PC-3 (cell line): ENCODE measurements at regions of chr18 and their contacts with region 1.

Region 1: GRCh38 chr18:32373995-32374394 is 96.7 kb downstream of the GAREM1 start:
- DNase-seq: peak; percentile 34
- ATAC-seq: no peak
- H3K4me3 ChIP-seq: no peak overlapping the region
- H3K27ac ChIP-seq: peak overlapping the region; percentile 87
- H3K4me1 ChIP-seq: peaks cover 31% of the 10 kb centered on the region
- H3K27me3 ChIP-seq: no peaks in the 10 kb centered on the region
- CTCF ChIP-seq: no peak

Region 2: DNA sequence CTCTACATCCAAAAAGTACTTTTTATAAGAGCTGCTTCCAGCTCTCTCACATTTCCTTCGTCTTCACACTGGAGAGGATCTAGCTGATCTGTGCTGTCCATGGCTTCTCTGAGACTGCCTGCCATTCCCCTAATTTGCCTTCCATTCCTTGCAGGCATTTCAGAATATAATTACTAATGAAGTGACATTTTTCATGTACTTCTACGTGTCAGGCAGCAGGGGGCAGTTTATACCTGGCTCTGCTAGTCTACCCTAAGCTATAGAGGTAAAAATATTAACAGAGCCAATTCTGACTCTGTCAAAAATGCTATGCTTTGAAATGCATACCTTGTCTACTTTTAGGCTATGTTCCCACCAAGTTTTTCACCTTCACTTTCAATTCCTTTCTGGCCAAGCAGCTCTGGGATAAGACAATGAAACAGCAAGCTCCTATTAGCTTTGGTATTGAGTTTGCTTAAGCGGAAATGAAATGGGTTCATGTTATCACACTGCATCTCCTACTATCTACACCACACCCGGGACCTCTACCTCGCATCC is 102.3 kb before region 1 on chr18:
- CTCF ChIA-PET with region 1: interaction called, 3 read pairs
- POLR2A ChIA-PET with region 1: no interaction called
- intact Hi-C with region 1: loop called (anchors 1 kb)
- DNase-seq: peak; percentile 30
- ATAC-seq: peak; percentile 68
- H3K4me3 ChIP-seq: no peak overlapping the region
- H3K27ac ChIP-seq: no peak overlapping the region
- H3K4me1 ChIP-seq: no peaks in the 10 kb centered on the region
- H3K27me3 ChIP-seq: no peaks in the 10 kb centered on the region
- CTCF ChIP-seq: peak; percentile 62

Region 3: DNA sequence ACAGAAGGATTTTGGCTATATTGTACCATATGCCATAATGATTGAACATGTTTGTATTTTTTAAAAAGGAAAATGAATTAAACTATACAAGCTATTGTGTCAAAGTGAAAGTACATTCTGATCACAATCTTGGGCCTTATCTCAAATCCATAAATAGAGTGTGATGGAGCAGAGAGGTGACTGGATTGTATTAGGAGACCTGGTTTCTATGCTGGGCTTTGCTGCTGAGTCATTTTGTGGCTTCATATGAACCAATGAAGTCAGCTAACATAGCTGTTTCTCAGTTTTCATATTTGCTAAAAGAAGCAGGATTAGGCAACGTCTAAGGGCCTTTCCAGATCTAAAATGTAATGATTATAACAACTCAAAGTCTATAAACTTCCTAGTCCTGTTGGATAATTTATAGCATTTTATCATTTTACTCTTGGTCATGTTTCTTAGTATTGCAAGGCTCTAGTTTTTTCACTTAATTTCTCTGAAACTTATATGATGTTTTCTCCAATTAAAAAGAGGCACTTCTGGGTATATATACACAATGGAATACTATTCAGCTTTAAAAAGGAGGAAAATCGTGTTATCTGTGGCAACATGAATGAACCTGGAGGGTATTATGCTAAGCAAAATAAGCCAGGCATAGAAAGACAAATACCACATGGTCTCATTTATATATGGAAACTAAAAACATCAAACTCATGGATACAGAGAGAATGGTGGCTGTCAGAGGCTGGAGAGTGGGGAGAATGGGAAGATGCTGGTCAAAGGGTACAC is 71.8 kb before region 1 on chr18:
- CTCF ChIA-PET with region 1: no interaction called
- POLR2A ChIA-PET with region 1: no interaction called
- intact Hi-C with region 1: loop called (anchors 5 kb)
- DNase-seq: peak; percentile 55
- ATAC-seq: peak; percentile 85
- H3K4me3 ChIP-seq: no peak overlapping the region
- H3K27ac ChIP-seq: peak overlapping the region; percentile 55
- H3K4me1 ChIP-seq: peaks cover 14% of the 10 kb centered on the region
- H3K27me3 ChIP-seq: no peaks in the 10 kb centered on the region
- CTCF ChIP-seq: no peak

Region 4: DNA sequence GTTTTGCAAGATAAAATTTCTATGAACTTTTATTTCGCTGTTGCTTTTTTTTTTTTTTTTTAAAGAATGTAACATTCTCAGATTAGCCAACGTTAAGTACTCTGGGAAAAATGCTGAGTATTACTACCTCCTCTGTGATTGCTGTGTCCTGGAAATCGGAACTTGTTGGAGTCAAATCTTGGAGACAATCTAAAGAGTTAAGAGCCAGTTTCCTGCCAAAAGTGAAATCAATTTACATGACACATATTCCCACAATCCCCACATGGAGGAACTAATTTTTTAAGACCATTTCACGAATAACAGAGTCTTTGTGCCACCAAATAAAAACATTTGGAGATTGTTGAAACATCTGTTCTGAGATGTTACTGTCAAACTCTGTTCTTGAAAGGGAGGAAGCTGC is 56.3 kb before region 1 on chr18:
- CTCF ChIA-PET with region 1: no interaction called
- POLR2A ChIA-PET with region 1: no interaction called
- intact Hi-C with region 1: loop called (anchors 5 kb)
- DNase-seq: no peak
- ATAC-seq: no peak
- H3K4me3 ChIP-seq: no peak overlapping the region
- H3K27ac ChIP-seq: no peak overlapping the region
- H3K4me1 ChIP-seq: peaks cover 4% of the 10 kb centered on the region; the same call in 1 of the 2 replicates
- H3K27me3 ChIP-seq: no peaks in the 10 kb centered on the region
- CTCF ChIP-seq: no peak

Region 5: DNA sequence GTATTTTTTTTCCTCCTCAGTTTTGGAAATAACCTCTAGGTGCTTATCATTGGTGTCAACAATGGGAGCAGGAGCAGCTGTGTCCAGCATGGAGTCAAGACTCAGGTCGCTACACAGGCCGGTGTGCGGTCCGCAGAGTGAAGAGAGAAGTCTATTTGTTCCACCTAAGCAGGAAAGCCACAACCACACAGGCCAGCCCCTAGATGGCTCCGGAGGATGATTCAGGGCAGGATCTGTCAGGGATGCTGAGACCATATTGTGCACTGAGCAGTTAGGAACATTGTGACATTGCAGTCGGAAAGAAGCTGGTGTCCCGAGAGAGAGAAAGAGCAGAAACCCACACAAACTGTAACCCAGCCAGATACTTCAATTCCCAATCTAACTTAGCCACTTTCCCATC is 40.2 kb before region 1 on chr18:
- CTCF ChIA-PET with region 1: no interaction called
- POLR2A ChIA-PET with region 1: no interaction called
- intact Hi-C with region 1: loop called (anchors 2 kb)
- DNase-seq: peak; percentile 19
- ATAC-seq: peak; percentile 80
- H3K4me3 ChIP-seq: no peak overlapping the region
- H3K27ac ChIP-seq: no peak overlapping the region
- H3K4me1 ChIP-seq: peaks cover 6% of the 10 kb centered on the region; the same call in 1 of the 2 replicates
- H3K27me3 ChIP-seq: no peaks in the 10 kb centered on the region
- CTCF ChIP-seq: peak; percentile 32; the same call in 1 of the 2 replicates

Region 6: DNA sequence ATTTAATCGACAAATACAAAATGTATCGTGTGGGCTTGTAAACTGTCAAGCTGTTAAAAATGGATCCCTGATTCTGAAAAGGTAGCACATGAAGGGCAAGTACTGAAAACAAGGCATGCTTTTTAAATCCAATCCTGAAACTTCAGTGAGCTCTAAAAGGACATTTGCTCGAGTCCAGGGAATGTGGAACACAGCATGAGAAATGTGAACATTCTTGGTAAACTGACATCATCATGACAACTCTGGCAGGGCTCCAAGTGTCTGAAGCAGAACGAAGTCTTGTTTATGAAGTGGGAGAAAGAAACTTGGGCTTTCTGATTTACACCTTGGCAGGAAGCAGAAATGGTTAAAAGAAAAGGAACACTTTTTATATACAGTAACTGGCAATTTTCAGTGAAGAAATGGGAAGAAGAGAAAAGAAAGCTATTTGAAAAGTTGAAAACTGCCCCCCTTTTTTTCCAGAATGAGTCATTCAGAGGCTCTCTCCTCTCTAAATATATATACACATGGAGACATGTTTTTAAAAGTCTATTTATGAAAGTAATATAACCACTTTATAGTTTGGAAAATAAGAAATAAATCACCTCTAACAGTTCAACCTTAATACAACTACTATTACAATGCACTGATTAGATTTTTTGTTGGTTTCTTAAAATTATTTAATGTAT is 24.1 kb before region 1 on chr18:
- CTCF ChIA-PET with region 1: no interaction called
- POLR2A ChIA-PET with region 1: no interaction called
- intact Hi-C with region 1: no loop called
- DNase-seq: peak; percentile 73
- ATAC-seq: no peak
- H3K4me3 ChIP-seq: peak overlapping the region; percentile 27; the same call in 1 of the 2 replicates
- H3K27ac ChIP-seq: peak overlapping the region; percentile 36
- H3K4me1 ChIP-seq: peaks cover 9% of the 10 kb centered on the region
- H3K27me3 ChIP-seq: no peaks in the 10 kb centered on the region
- CTCF ChIP-seq: no peak

Region 7: DNA sequence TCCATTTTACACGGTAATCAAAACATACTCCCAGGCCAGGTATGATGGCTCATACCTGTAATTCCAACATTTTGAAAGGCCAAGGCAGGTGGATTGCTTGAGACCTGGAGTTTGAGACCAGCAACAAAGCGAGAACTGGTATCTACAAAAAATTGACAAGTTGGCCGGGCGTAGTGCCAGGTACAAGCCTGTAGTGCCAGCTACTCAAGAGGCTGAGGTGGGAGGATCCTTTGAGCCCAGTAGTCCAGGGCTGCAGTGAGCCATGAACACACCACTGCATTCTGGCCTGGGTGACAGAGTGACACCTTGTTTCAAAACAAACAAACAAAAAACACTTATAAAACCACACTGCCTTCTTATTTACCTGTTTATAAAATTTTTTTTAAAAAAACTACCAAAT is 15.9 kb after region 1 on chr18:
- CTCF ChIA-PET with region 1: no interaction called
- POLR2A ChIA-PET with region 1: no interaction called
- intact Hi-C with region 1: no loop called
- DNase-seq: no peak
- ATAC-seq: no peak
- H3K4me3 ChIP-seq: no peak overlapping the region
- H3K27ac ChIP-seq: no peak overlapping the region
- H3K4me1 ChIP-seq: peaks cover 5% of the 10 kb centered on the region; the same call in 1 of the 2 replicates
- H3K27me3 ChIP-seq: no peaks in the 10 kb centered on the region
- CTCF ChIP-seq: no peak

Region 8: DNA sequence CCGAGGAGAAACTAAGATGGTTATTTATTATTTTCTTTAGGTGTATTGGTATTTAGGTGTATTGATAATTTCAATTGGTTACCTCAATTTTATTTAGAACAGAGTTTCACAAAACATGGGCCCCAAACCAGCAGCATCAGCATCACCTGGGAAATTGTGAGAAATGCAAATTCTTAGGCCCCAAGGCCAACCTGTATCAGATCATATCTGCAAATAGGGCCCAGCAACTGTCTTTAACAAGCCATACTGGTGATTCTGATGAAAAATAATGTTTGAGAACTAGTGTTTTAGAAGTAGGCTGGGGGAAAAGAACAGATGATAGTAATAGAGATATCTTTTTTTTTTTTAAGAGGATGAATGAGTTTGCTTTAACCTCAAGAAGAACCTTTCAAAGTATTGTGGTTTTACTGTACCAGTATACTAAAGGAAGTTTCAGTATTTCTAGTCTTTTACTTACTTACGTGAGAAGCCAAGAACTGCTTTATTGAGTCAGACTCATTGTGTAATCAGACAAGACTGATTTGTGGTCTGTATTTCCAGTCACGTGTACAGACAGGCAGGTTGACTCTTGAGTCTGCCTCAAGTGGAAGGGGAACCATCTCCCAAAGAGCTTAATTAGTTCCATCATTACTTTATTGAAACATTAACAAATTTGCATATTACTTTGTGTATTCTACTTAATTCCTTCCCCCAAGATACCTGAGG is 157.1 kb after region 1 on chr18:
- CTCF ChIA-PET with region 1: no interaction called
- POLR2A ChIA-PET with region 1: no interaction called
- intact Hi-C with region 1: no loop called
- DNase-seq: peak; percentile 46
- ATAC-seq: no peak
- H3K4me3 ChIP-seq: no peak overlapping the region
- H3K27ac ChIP-seq: no peak overlapping the region
- H3K4me1 ChIP-seq: no peaks in the 10 kb centered on the region
- H3K27me3 ChIP-seq: no peaks in the 10 kb centered on the region
- CTCF ChIP-seq: no peak